Mammary epithelial cell (primary cell): ENCODE measurements at regions of chr15 and their contacts with region 1.

Region 1: DNA sequence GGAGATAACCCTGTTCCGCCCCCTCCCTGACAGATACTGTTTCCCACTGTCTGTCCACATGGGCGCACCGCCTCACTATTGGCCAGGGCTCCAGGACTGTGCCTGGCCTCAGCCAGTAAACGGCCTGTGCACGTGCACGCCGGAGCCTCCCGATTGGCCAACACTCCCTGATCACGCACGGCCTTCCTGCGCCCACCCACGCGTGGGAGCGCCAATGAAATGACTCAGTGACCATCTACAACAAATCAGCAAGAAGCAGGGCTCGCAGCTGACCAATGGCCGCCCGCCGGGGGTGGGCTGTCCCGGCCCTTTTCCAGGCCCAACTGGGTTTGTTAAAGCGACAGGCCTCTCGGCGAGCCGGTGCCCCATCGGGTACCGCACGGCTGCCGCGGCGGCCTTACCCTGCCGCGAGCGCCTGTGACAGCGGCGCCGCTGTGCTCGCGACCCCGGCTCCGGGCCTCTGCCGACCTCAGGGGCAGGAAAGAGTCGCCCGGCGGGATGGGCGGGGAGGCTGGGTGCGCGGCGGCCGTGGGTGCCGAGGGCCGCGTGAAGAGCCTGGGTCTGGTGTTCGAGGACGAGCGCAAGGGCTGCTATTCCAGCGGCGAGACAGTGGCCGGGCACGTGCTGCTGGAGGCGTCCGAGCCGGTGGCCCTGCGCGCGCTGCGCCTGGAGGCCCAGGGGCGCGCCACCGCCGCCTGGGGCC is at the start of gene ARRDC4:
- DNase-seq: peak; percentile 100
- H3K4me3 ChIP-seq: peak within 1 kb of the TSS; percentile 68 to 85 (median 78)
- H3K27ac ChIP-seq: peak within 1 kb of the TSS; percentile 82
- H3K4me1 ChIP-seq: peaks cover 8% of the 10 kb centered on the region
- H3K27me3 ChIP-seq: no peaks in the 10 kb centered on the region
- CTCF ChIP-seq: no peak
- total RNA-seq, gene ARRDC4: 18.3 to 61.5 TPM

Region 2: GRCh38 chr15:97909291-97909891 is 51.1 kb before region 1 on chr15:
- CTCF ChIA-PET with region 1: no interaction called
- dilution Hi-C with region 1: no loop called
- in situ Hi-C with region 1: no loop called
- intact Hi-C with region 1: loop called (anchors 1 kb)
- DNase-seq: peak; percentile 45
- H3K4me3 ChIP-seq: no peak overlapping the region
- H3K27ac ChIP-seq: no peak overlapping the region
- H3K4me1 ChIP-seq: peaks cover 1% of the 10 kb centered on the region
- H3K27me3 ChIP-seq: no peaks in the 10 kb centered on the region
- CTCF ChIP-seq: peak; percentile 96 to 99

Region 3: DNA sequence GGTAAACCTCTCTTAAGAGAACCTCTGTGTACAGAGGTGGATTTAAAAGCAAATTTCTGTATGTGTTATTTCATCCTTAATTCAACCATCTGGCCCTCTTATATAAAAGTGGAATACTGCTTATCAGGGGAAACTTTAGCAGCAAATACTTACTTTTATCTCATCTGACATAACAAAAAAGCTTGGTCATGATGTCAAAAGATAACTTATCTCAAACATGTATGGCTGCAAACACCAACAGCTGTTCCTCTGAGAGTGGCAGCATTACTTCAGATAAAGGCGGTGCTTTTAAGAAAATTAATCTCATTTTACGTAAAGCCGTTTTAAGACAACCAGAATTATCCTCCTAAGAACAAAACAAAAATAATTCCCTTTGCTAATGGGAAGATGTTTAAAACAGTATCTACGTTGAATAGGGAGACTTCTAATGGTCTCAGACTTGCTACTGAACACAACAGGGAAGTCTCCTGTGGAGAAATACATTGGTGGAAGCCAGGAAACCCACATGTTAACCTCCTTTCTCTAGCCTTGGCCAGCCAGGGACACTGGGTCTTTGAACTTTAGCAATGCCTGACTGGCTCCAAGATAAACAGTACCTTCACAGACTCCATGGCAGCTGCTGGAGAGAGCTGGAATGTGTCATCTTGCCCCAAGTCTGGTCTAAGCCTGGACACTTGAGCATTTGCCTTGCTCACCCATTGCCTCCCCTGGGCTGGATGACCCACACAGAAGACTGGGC is 18.1 kb after region 1 on chr15:
- CTCF ChIA-PET with region 1: no interaction called
- dilution Hi-C with region 1: no loop called
- in situ Hi-C with region 1: no loop called
- intact Hi-C with region 1: no loop called
- DNase-seq: no peak
- H3K4me3 ChIP-seq: no peak overlapping the region
- H3K27ac ChIP-seq: no peak overlapping the region
- H3K4me1 ChIP-seq: peaks cover 23% of the 10 kb centered on the region
- H3K27me3 ChIP-seq: no peaks in the 10 kb centered on the region
- CTCF ChIP-seq: no peak

Region 4: DNA sequence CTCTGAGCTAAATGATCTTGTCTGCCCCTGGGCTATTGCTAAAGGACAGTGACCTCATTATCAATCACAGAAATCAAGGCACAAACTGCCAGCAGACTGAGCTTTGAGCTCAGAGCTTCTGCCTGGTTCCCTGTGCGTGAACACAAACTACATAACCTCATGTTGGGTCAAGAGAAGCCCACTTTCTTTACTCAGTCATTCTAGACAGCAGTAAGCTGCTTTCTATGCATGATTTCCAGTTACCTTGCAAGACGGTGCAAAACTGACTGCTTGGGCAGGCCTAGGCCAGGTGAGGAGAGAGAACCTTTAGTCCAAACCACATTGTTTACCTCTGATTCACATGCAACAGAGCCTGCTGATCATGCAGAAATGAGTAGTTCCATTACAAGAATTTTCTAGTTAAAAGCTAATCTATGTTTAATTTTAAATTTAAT is 75.1 kb after region 1 on chr15:
- CTCF ChIA-PET with region 1: no interaction called
- dilution Hi-C with region 1: no loop called
- in situ Hi-C with region 1: no loop called
- intact Hi-C with region 1: loop called (anchors 2 kb)
- DNase-seq: peak; percentile 83
- H3K4me3 ChIP-seq: peak overlapping the region in 2 of 3 experiments; percentile 20 to 29
- H3K27ac ChIP-seq: peak overlapping the region; percentile 94
- H3K4me1 ChIP-seq: peaks cover 21% of the 10 kb centered on the region
- H3K27me3 ChIP-seq: no peaks in the 10 kb centered on the region
- CTCF ChIP-seq: no peak

Region 5: GRCh38 chr15:98169551-98169950 is 209.0 kb after region 1 on chr15:
- CTCF ChIA-PET with region 1: no interaction called
- dilution Hi-C with region 1: no loop called
- in situ Hi-C with region 1: no loop called
- intact Hi-C with region 1: loop called (anchors 2 kb)
- DNase-seq: no peak
- H3K4me3 ChIP-seq: no peak overlapping the region
- H3K27ac ChIP-seq: no peak overlapping the region
- H3K4me1 ChIP-seq: peaks cover 23% of the 10 kb centered on the region
- H3K27me3 ChIP-seq: no peaks in the 10 kb centered on the region
- CTCF ChIP-seq: no peak

Region 6: GRCh38 chr15:98272625-98273024 is 312.1 kb after region 1 on chr15:
- CTCF ChIA-PET with region 1: no interaction called
- dilution Hi-C with region 1: no loop called
- in situ Hi-C with region 1: no loop called
- intact Hi-C with region 1: no loop called
- DNase-seq: no peak
- H3K4me3 ChIP-seq: no peak overlapping the region
- H3K27ac ChIP-seq: no peak overlapping the region
- H3K4me1 ChIP-seq: no peaks in the 10 kb centered on the region
- H3K27me3 ChIP-seq: no peaks in the 10 kb centered on the region
- CTCF ChIP-seq: peak in 1 of 2 donors; percentile 15